HCT116 (cell line): ENCODE measurements at regions of chr3 and their contacts with region 1.

Region 1: GRCh38 chr3:126357295-126358037 is at the start of gene KLF15:
- DNase-seq: peak; percentile 43
- ATAC-seq: peak; percentile 81
- H3K4me3 ChIP-seq: peak within 1 kb of the TSS; percentile 55 to 68
- H3K27ac ChIP-seq: peak within 1 kb of the TSS; percentile 22; the same call in 1 of the 2 replicates
- H3K4me1 ChIP-seq: peaks cover 10 to 30% of the 10 kb centered on the region in 2 experiments; a peak in 3 of 4 replicates
- H3K27me3 ChIP-seq: peaks cover 6% of the 10 kb centered on the region; the same call in 1 of the 2 replicates
- CTCF ChIP-seq: no peak
- POLR2A ChIP-seq: no peak
- RAD21 ChIP-seq: no peak
- total RNA-seq, gene KLF15: 3.3 TPM

Region 2: GRCh38 chr3:126267226-126267975 is 90.1 kb before region 1 on chr3:
- CTCF ChIA-PET with region 1: no interaction called
- POLR2A ChIA-PET with region 1: no interaction called
- RAD21 ChIA-PET with region 1: no interaction called
- intact Hi-C with region 1: loop called (anchors 2 kb)
- DNase-seq: peak; percentile 35
- ATAC-seq: peak; percentile 87
- H3K4me3 ChIP-seq: peak overlapping the region; percentile 44 to 63
- H3K27ac ChIP-seq: peak overlapping the region; percentile 63
- H3K4me1 ChIP-seq: peaks cover 7 to 33% of the 10 kb centered on the region in 2 experiments
- H3K27me3 ChIP-seq: no peaks in the 10 kb centered on the region
- CTCF ChIP-seq: peak in 1 of 3 experiments; percentile 23; a peak in 1 of 6 replicates
- POLR2A ChIP-seq: peak; percentile 19
- RAD21 ChIP-seq: no peak